MCF 10A (cell line): ENCODE measurements at regions of chr7 and their contacts with region 1.

Region 1: GRCh38 chr7:149147072-149147751 is at the start of gene ZNF398:
- DNase-seq: peak; percentile 67
- H3K4me3 Mint-ChIP-seq: peak within 1 kb of the TSS; percentile 80
- H3K27ac Mint-ChIP-seq: peak within 1 kb of the TSS; percentile 35
- H3K4me1 Mint-ChIP-seq: peaks cover 7% of the 10 kb centered on the region
- H3K27me3 Mint-ChIP-seq: no peaks in the 10 kb centered on the region
- CTCF ChIP-seq: peak; percentile 73
- total RNA-seq, gene ZNF398: 13.8 and 15.7 TPM in 2 replicates

Region 2: GRCh38 chr7:149125863-149126661 is 21.1 kb before region 1 on chr7 and contains the start of gene ZNF425:
- CTCF ChIA-PET with region 1: interaction called, 17 read pairs
- POLR2A ChIA-PET with region 1: interaction called, 61 read pairs
- intact Hi-C with region 1: loop called (anchors 1 kb)
- DNase-seq: peak; percentile 93
- H3K4me3 Mint-ChIP-seq: peak within 1 kb of the TSS; percentile 97
- H3K27ac Mint-ChIP-seq: peak within 1 kb of the TSS; percentile 99
- H3K4me1 Mint-ChIP-seq: peaks cover 18% of the 10 kb centered on the region
- H3K27me3 Mint-ChIP-seq: no peaks in the 10 kb centered on the region
- CTCF ChIP-seq: peak; percentile 89
- total RNA-seq, gene ZNF425: 2.6 and 3.3 TPM in 2 replicates

Region 3: GRCh38 chr7:149133028-149133705 is 14.0 kb before region 1 on chr7:
- CTCF ChIA-PET with region 1: interaction called, 33 read pairs
- POLR2A ChIA-PET with region 1: interaction called, 61 read pairs
- intact Hi-C with region 1: no loop called
- DNase-seq: no peak
- H3K4me3 Mint-ChIP-seq: no peak overlapping the region
- H3K27ac Mint-ChIP-seq: no peak overlapping the region
- H3K4me1 Mint-ChIP-seq: peaks cover 2% of the 10 kb centered on the region
- H3K27me3 Mint-ChIP-seq: no peaks in the 10 kb centered on the region
- CTCF ChIP-seq: no peak

Region 4: GRCh38 chr7:149161241-149161848 is 14.1 kb after region 1 on chr7:
- CTCF ChIA-PET with region 1: interaction called, 24 read pairs
- POLR2A ChIA-PET with region 1: interaction called, 4 read pairs
- intact Hi-C with region 1: no loop called
- DNase-seq: no peak
- H3K4me3 Mint-ChIP-seq: no peak overlapping the region
- H3K27ac Mint-ChIP-seq: no peak overlapping the region
- H3K4me1 Mint-ChIP-seq: peaks cover 6% of the 10 kb centered on the region
- H3K27me3 Mint-ChIP-seq: no peaks in the 10 kb centered on the region
- CTCF ChIP-seq: no peak

Region 5: DNA sequence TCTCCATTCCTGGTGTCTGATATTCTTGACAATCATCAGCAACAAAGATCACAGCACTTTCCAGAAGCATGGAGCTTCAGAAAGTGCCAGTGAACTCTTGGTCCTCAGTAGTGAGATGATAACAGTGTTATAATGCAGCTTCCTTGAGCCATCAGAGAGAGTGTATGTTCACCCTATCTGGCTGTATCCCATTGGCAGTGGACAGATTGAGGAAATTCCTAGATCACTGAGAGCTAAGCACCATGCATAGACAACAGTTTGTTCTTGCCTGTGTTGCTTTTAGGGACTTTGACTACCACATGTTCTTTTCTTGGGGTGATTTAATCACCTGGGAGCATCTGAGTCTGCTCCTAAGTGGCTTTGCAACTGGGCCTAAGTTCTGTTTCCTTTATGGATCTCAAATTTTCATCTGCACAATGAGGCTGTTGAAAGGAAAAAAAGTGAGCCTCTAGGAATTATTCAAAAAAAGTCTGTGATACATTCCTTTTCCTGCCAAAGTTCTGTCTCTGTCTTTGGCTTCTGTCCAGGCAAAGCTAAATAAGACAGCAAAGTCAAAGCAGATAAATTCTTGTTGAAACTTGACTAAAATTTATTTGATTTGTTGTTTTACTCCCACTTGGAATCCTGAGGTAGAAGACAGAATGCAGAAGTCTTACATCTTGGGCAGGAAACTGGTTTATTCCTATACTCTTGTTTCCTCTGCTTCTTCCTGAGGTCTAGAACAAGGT is 33.7 kb after region 1 on chr7:
- CTCF ChIA-PET with region 1: interaction called, 3 read pairs
- POLR2A ChIA-PET with region 1: interaction called, 13 read pairs
- intact Hi-C with region 1: no loop called
- DNase-seq: peak; percentile 32
- H3K4me3 Mint-ChIP-seq: no peak overlapping the region
- H3K27ac Mint-ChIP-seq: peak overlapping the region; percentile 35
- H3K4me1 Mint-ChIP-seq: peaks cover 15% of the 10 kb centered on the region
- H3K27me3 Mint-ChIP-seq: no peaks in the 10 kb centered on the region
- CTCF ChIP-seq: no peak

Region 6: DNA sequence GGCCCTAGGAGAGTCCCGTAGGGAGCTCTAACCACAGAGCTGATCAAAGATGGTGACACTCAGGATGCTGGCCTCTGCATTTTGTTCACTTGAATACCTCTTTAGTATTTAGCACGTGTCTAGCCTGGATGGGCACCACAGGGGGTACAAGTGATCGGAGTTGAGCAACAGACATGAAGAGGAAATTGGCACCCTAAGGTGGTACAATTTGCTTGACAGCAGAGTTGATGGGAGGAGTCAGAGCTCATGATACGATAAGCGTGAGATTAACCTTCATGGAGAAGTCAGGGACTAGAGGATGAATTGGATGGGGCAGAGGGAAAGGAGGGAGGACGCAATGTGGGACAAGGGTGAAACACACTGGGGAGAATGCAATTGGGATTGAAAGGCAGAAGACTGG is 82.3 kb after region 1 on chr7:
- CTCF ChIA-PET with region 1: no interaction called
- POLR2A ChIA-PET with region 1: interaction called, 6 read pairs
- intact Hi-C with region 1: loop called (anchors 5 kb)
- DNase-seq: no peak
- H3K4me3 Mint-ChIP-seq: no peak overlapping the region
- H3K27ac Mint-ChIP-seq: no peak overlapping the region
- H3K4me1 Mint-ChIP-seq: peaks cover 17% of the 10 kb centered on the region
- H3K27me3 Mint-ChIP-seq: no peaks in the 10 kb centered on the region
- CTCF ChIP-seq: no peak